HepG2 (cell line): ENCODE measurements at regions of chr4 and their contacts with region 1.

Region 1: DNA sequence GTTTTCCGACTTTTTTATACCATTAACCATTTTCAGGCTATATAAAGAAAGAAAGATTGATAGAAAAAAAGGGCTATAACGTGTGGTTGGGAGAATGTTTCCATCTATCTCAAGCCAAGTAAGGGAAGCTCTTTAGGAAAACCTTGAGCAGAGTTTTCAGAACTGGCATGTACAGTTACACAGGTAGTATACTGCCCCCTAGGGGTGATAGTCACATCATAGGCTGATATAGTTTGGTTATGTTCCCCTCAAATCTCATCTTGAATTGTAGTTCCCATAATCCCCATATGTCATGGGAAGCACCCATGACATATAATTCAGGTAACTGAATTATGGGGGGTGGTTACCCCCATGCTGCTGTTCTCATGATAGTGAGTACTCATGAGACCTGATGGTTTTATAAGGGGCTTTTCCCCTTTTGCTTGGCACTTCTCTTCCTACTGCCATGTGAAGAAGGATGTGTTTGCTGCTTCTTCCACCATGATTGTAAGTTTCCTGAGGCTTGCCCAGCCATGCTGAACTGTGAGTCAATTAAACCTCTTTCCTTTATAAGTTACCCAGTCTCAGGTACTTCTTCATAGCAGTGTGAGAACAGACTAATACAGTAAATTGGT is 186.8 kb downstream of the TMA16 start:
- DNase-seq: peak; percentile 35
- ATAC-seq: peak; percentile 87
- H3K4me3 ChIP-seq: no peak overlapping the region
- H3K27ac ChIP-seq: no peak overlapping the region
- H3K4me1 ChIP-seq: no peaks in the 10 kb centered on the region
- H3K27me3 ChIP-seq: no peaks in the 10 kb centered on the region
- CTCF ChIP-seq: peak; percentile 67
- EP300 ChIP-seq: no peak
- POLR2A ChIP-seq: no peak
- RAD21 ChIP-seq: no peak

Region 2: GRCh38 chr4:163484906-163485305 is 196.4 kb before region 1 on chr4:
- CTCF ChIA-PET with region 1: interaction called, 9 read pairs
- POLR2A ChIA-PET with region 1: no interaction called
- in situ Hi-C with region 1: no loop called
- intact Hi-C with region 1: loop called (anchors 2 kb)
- DNase-seq: peak; percentile 41
- ATAC-seq: peak; percentile 81
- H3K4me3 ChIP-seq: no peak overlapping the region
- H3K27ac ChIP-seq: no peak overlapping the region
- H3K4me1 ChIP-seq: no peaks in the 10 kb centered on the region
- H3K27me3 ChIP-seq: no peaks in the 10 kb centered on the region
- CTCF ChIP-seq: peak; percentile 76
- EP300 ChIP-seq: no peak
- POLR2A ChIP-seq: no peak
- RAD21 ChIP-seq: peak; percentile 50; the same call in 1 of the 2 replicates

Region 3: GRCh38 chr4:164012396-164013027 is 331.2 kb after region 1 on chr4:
- CTCF ChIA-PET with region 1: no interaction called
- POLR2A ChIA-PET with region 1: no interaction called
- in situ Hi-C with region 1: loop called (anchors 25 kb)
- intact Hi-C with region 1: loop called (anchors 1 kb)
- DNase-seq: peak; percentile 28
- ATAC-seq: peak; percentile 98
- H3K4me3 ChIP-seq: no peak overlapping the region
- H3K27ac ChIP-seq: no peak overlapping the region
- H3K4me1 ChIP-seq: no peaks in the 10 kb centered on the region
- H3K27me3 ChIP-seq: no peaks in the 10 kb centered on the region
- CTCF ChIP-seq: peak; percentile 75
- EP300 ChIP-seq: no peak
- POLR2A ChIP-seq: no peak
- RAD21 ChIP-seq: peak; percentile 42; the same call in 1 of the 2 replicates

Region 4: DNA sequence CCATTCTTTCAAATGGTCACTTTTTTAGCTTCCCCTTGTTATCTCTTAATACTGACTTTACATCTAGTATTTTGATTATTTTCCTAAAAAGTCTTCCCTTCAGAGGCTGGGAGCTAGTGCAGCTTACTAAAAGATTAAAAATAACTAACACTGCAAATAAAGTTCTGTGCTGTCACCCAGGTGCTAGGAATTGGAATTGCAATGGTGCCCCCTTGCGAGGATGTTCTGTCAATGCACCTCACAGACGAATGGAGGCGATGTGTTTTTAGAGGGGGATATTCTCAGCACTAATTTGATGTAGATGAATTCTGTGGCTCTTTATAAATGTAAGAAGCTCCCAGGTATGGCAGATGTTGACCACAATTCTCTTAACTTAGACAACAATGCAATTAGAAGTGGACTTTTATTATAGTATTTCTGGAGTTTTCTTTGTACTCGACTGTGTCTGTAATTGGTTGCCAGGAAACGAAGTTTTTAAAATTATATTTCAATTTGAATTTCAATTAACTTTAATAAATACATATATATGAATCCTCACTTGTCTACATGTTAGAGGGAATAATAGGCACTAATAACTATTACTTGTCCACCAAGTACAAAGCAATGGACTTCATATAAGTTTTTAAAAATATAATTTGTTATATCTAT is 1050.6 kb after region 1 on chr4:
- CTCF ChIA-PET with region 1: no interaction called
- POLR2A ChIA-PET with region 1: no interaction called
- in situ Hi-C with region 1: no loop called
- intact Hi-C with region 1: loop called (anchors 10 kb)
- DNase-seq: peak; percentile 20
- ATAC-seq: peak; percentile 72; the same call in 2 of the 3 replicates
- H3K4me3 ChIP-seq: no peak overlapping the region
- H3K27ac ChIP-seq: no peak overlapping the region
- H3K4me1 ChIP-seq: no peaks in the 10 kb centered on the region
- H3K27me3 ChIP-seq: no peaks in the 10 kb centered on the region
- CTCF ChIP-seq: peak; percentile 78
- EP300 ChIP-seq: no peak
- POLR2A ChIP-seq: no peak
- RAD21 ChIP-seq: 0 out of 2 replicates have a peak, but pooled peaks have one; percentile 30